BJ (cell line): ENCODE measurements at regions of chr16 and their contacts with region 1.

Region 1: GRCh38 chr16:87636072-87636684 is 33.9 kb downstream of the JPH3 start:
- DNase-seq: peak; percentile 16
- H3K4me3 ChIP-seq: no peak overlapping the region
- H3K27me3 ChIP-seq: peaks cover 7% of the 10 kb centered on the region
- CTCF ChIP-seq: peak; percentile 82

Region 2: GRCh38 chr16:87411468-87412271 is 224.5 kb before region 1 on chr16:
- CTCF ChIA-PET with region 1: interaction called, 66 read pairs
- POLR2A ChIA-PET with region 1: no interaction called
- DNase-seq: no peak
- H3K4me3 ChIP-seq: no peak overlapping the region
- H3K27me3 ChIP-seq: no peaks in the 10 kb centered on the region
- CTCF ChIP-seq: no peak

Region 3: DNA sequence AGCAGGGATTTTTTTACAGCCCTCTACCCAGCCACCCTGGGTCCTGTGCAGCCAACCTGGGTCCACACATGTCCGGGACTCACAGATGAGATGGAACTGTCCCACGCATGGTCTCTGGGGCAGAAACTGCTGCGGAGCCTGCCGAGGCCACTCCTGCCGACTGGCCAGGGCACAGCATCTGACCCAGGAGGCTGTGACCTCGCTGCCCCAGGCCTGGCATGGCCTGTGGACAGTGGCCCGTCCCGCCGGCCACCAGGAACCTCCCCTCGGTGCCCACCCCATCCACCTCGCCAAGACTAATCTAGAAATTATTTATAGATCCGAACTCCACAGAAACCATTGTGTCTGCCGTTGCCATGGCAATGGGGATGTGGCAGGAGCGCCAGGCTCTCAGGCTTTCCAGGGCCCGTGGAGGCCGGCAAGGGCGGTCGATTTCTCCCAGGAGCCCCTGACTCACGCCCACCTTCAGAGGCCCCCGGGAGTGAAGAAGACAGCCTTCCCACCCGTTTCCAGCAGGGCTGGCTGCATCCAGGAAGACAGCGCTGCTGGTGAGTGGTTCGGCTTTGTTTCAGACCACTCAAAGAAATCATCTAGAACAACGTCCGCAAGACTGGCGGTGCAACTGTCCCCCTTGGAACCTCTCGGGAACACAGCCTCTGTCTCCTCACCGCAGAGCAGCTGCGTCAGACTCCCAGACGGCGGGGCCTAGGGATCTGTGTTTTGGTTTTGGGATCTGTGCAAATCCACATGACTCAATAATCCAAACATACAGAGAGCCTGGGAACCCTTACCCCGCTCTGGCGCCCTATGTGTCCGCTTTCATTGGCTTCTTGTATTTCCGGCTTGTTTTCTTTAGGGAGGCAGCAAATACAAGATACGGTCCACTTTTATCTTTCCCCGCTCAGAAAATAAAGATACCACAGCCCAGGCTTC is 95.0 kb before region 1 on chr16:
- CTCF ChIA-PET with region 1: interaction called, 13 read pairs
- POLR2A ChIA-PET with region 1: no interaction called
- DNase-seq: no peak
- H3K4me3 ChIP-seq: no peak overlapping the region
- H3K27me3 ChIP-seq: peaks cover 17% of the 10 kb centered on the region
- CTCF ChIP-seq: no peak

Region 4: DNA sequence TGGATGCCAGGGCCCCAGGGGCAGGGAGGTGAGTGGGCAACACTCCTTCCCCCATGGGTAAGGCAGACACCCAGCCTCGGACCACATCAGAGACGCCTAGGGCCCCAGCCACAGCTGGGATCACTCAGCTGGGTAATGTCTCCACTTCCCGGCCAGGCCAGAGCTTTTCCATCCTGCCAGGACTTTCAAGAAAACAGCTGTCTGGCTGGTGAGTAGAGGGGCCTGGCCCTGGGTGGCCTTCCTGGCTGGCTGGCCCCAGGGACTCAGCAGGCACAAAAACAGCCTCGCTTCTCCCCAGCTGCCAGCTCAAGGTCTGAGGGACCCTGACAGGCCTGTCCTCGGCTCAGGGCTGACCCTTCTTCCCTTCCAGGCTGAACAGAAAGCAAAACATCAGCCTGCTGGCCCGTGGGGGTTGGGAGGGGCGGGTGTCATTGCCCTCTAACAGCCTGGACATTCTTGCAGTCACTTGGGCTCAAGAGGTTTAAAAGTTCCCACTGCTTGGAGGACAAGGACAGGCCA is 79.2 kb before region 1 on chr16:
- CTCF ChIA-PET with region 1: interaction called, 16 read pairs
- POLR2A ChIA-PET with region 1: no interaction called
- DNase-seq: no peak
- H3K4me3 ChIP-seq: no peak overlapping the region
- H3K27me3 ChIP-seq: no peaks in the 10 kb centered on the region; the same call in 1 of the 2 replicates
- CTCF ChIP-seq: no peak

Region 5: GRCh38 chr16:87581833-87582203 is 54.4 kb before region 1 on chr16:
- CTCF ChIA-PET with region 1: interaction called, 87 read pairs
- POLR2A ChIA-PET with region 1: no interaction called
- DNase-seq: peak; percentile 78
- H3K4me3 ChIP-seq: no peak overlapping the region
- H3K27me3 ChIP-seq: peaks cover 3% of the 10 kb centered on the region
- CTCF ChIP-seq: no peak

Region 6: DNA sequence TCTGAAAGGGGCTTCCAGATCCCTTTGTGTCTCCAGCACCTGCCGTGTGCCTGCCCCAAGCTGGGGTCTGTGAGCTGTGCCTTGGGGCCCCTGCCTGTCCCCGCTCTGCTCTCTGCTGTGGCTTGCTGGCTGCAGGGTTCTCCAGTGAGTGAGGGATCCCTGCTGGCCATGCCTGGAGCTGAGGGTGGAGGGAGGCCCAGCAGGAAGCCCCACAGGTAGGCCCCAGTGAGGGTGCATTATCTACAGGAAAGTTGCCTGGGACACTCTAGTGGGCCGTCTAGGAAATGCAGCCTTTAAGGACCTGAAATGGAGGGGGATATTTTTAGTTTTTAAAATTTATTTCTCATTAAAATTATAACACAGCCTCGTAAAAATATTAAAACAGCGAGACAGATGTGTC is 17.1 kb after region 1 on chr16:
- CTCF ChIA-PET with region 1: interaction called, 18 read pairs
- POLR2A ChIA-PET with region 1: interaction called, 3 read pairs
- DNase-seq: no peak
- H3K4me3 ChIP-seq: no peak overlapping the region
- H3K27me3 ChIP-seq: peaks cover 6% of the 10 kb centered on the region
- CTCF ChIP-seq: peak; percentile 53